Mammary epithelial cell (primary cell): ENCODE measurements at regions of chr15 and their contacts with region 1.

Region 1: GRCh38 chr15:66411190-66411589 is 24.5 kb downstream of the MAP2K1 start:
- DNase-seq: no peak
- H3K4me3 ChIP-seq: no peak overlapping the region
- H3K27ac ChIP-seq: no peak overlapping the region
- H3K4me1 ChIP-seq: peaks cover 11% of the 10 kb centered on the region
- H3K27me3 ChIP-seq: no peaks in the 10 kb centered on the region
- CTCF ChIP-seq: no peak

Region 2: GRCh38 chr15:66452971-66453580 is 41.9 kb after region 1 on chr15:
- CTCF ChIA-PET with region 1: no interaction called
- dilution Hi-C with region 1: loop called (anchors 5 kb)
- in situ Hi-C with region 1: no loop called
- intact Hi-C with region 1: no loop called
- DNase-seq: no peak
- H3K4me3 ChIP-seq: no peak overlapping the region
- H3K27ac ChIP-seq: no peak overlapping the region
- H3K4me1 ChIP-seq: peaks cover under 1% of the 10 kb centered on the region
- H3K27me3 ChIP-seq: no peaks in the 10 kb centered on the region
- CTCF ChIP-seq: no peak

Region 3: GRCh38 chr15:66476535-66476934 is 65.3 kb after region 1 on chr15:
- CTCF ChIA-PET with region 1: no interaction called
- dilution Hi-C with region 1: loop called (anchors 5 kb)
- in situ Hi-C with region 1: no loop called
- intact Hi-C with region 1: no loop called
- DNase-seq: no peak
- H3K4me3 ChIP-seq: no peak overlapping the region
- H3K27ac ChIP-seq: no peak overlapping the region
- H3K4me1 ChIP-seq: peaks cover 15% of the 10 kb centered on the region
- H3K27me3 ChIP-seq: no peaks in the 10 kb centered on the region
- CTCF ChIP-seq: no peak